ENCODE measurements at regions of chr3 and their contacts with region 1.

Region 1: GRCh38 chr3:119293871-119294695 is at the start of gene ARHGAP31:
- DNase-seq: peak; percentile 86
- ATAC-seq: peak; percentile 69 to 82
- total RNA-seq, gene ARHGAP31: 33.5 to 44.0 TPM

Region 2: DNA sequence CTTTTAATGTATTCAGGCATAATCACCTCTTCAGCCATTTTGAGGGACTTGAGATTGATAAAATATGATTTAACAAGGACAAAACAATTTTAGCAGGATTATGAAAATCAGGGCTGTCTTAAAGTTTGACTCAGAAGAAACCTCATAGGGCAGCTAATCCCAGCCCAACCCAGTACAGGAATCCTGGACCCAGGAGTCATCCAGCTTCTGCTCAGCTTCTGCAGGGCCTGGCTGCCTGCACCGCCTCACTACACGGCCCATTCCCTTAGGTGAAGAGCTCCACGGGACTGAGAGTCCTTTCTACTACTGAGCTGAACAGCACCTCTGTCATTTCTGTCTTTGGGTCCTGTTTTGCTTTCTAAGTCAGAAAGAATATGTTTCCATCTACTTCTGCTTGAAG is 37.6 kb after region 1 on chr3:
- intact Hi-C with region 1: loop called in 1 of 2 experiments (anchors 5 kb)
- DNase-seq: no peak
- ATAC-seq: peak in 1 of 2 donors; percentile 23

Region 3: GRCh38 chr3:119463171-119464169 is 169.4 kb after region 1 on chr3 and contains the start of gene TMEM39A:
- intact Hi-C with region 1: loop called in 1 of 2 experiments (anchors 10 kb)
- DNase-seq: peak; percentile 100
- ATAC-seq: peak; percentile 96 to 97
- total RNA-seq, gene TMEM39A: 27.0 to 40.5 TPM

Region 4: GRCh38 chr3:119498186-119498987 is 204.3 kb after region 1 on chr3 and contains the start of gene TIMMDC1:
- intact Hi-C with region 1: no loop called
- DNase-seq: peak; percentile 97
- ATAC-seq: peak; percentile 99 to 100
- total RNA-seq, gene TIMMDC1: 190 to 200 TPM

Region 5: GRCh38 chr3:119570216-119570615 is 276.1 kb after region 1 on chr3:
- intact Hi-C with region 1: no loop called
- DNase-seq: no peak
- ATAC-seq: peak; percentile 47 to 78